Head of caudate nucleus (tissue), 42 donors: ENCODE measurements at regions of chr10 and their contacts with region 1.

Region 1: DNA sequence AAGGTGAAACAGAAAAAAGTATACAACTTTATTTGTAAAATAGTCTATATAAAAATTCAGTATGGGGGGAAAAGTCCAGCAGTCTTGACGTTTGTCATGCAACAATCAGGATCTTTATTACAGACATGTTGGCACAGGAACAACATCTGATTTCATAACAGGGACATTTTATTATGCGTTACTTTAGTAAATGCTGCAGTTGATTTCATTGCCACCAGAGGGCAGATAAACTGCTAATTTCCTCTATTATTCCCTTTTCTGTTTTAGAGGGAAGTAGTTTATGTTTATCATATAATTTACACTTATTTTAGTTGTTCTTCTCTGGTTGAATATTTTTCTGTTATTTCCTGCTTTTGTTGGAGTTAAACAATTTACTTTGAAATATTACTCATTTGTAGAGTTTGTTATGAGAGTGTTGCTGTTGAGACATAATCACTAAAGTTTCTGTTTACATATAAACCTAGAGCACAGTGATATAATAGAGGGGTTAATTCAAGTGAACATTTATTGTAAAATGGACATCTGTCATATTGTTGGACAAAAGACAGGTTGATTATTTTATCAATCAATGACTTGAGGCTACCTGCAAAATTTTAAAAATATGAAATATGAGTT is 3.3 kb downstream of the PLXDC2 start:
- DNase-seq: peak in 20 of 42 donors; percentile 10 to 89 (median 62)

Region 2: DNA sequence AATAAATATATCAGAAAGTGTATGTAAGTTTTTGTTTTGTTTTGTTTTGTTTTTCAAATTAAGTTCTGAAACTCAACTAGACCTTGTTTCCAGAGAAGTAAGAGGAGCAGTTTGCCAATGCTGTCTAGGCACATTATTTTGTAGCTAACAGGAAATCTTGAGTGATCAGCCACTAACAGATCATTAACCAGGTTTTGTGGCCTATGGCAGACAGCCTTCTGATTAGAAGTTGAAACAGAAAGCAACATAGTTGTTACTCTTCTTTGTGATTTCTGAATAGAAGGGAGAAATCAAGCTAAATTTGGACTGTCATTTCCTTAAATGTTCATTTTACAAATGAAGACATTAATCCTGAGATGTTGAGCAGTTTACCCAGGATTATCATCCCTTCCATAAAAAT is 139.3 kb after region 1 on chr10:
- intact Hi-C with region 1: loop called (anchors 5 kb)
- DNase-seq: no peak

Region 3: GRCh38 chr10:20007426-20007825 is 187.9 kb after region 1 on chr10:
- intact Hi-C with region 1: loop called (anchors 5 kb)
- DNase-seq: no peak

Region 4: DNA sequence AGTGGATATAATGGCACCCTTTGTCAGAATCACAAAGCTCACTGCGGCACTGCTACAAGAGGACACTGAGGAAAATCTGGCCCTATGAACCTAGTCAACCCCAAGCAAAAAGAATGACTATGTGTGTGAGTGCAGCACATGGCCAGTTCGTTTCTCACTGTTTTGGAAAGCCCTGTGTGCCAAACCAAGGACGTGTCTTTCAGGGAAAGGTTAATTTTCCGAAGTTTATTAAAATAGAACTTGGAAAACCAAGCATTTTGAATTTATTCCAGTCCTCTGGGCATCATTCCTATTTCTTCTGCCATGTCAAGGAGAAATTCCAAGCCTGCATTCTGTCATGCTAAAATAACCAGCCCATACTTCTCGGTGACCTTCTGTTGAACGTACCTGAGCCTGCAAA is 468.5 kb after region 1 on chr10:
- intact Hi-C with region 1: loop called (anchors 10 kb)
- DNase-seq: peak in 32 of 42 donors; percentile 12 to 80 (median 46)

Region 5: DNA sequence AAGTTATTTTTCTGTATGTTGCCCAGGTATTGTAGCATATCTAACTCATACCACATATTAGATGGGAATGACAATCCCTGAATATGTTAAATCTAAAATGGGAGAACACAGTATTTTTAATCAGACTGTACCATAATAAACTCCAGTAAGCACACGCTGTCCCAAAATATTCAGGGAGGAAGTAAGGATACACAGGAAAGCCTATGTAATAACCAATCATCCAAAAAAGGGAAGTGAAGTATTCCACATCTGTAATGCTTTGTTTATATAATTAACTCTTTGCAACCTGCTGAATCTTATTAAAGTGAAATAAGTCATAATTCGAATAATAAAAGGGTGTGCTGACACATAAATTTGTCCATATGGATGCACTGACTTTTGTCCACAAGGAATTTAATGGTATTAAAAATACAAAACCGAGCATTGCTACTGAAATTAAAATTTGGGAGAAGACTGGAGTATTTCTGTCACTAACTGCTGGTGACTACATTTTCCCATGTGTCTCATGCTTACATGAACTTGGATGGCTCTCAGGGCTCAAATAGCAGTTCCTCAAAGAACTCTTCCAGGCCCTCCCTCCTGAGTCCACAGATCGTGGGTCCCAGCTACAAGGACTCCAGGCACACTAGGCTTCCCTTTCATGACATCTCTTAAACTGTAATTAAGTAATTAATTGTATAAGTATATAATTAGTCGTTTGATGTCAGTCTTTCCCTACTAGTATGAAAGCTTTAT is 957.0 kb after region 1 on chr10:
- intact Hi-C with region 1: loop called (anchors 10 kb)
- DNase-seq: no peak